Right ventricle myocardium inferior (tissue), 1 donor: ENCODE measurements at regions of chr1 and their contacts with region 1.

Region 1: DNA sequence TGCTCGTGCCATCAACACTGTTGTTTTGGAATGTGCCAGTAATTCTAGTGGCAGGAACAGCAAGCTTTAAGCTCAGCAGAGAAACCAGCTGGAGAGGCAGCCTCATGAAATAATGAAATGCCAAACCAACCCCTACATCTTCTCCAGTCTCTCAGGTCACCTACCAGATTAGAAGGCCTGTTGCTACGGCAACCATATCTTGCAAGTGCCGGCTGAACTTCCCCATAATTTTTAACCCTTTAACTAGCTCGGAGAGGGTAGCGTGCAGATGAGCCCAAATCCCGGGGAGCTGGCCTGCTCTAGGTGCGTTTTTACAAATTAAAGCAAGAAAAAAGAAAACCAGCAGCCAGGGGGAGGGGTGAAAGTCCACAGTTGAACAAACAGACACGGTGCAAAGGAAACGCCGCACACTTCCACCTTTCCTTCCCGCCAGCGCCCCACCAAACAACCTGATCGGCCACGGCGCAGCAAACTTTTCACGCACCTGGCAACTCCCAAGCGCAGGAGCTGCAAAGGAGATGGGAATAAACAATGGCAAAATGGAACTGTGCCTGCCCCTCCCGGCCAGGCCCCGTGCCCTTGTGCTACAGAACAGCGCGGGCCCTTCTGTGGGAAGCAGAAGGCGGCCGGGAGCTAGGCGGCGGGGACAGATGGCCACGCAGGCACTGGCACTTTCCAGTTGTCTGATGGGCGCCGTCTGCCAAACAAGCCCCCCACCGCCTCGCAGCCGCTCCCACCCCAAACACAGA is 50.1 kb downstream of the SSBP3 start:
- DNase-seq: no peak
- ATAC-seq: no peak

Region 2: GRCh38 chr1:54310439-54311328 is 45.4 kb before region 1 on chr1:
- intact Hi-C with region 1: loop called (anchors 2 kb)
- DNase-seq: no peak
- ATAC-seq: no peak

Region 3: GRCh38 chr1:54375712-54376429 is 19.8 kb after region 1 on chr1:
- intact Hi-C with region 1: loop called (anchors 2 kb)
- DNase-seq: no peak
- ATAC-seq: peak; percentile 38

Region 4: DNA sequence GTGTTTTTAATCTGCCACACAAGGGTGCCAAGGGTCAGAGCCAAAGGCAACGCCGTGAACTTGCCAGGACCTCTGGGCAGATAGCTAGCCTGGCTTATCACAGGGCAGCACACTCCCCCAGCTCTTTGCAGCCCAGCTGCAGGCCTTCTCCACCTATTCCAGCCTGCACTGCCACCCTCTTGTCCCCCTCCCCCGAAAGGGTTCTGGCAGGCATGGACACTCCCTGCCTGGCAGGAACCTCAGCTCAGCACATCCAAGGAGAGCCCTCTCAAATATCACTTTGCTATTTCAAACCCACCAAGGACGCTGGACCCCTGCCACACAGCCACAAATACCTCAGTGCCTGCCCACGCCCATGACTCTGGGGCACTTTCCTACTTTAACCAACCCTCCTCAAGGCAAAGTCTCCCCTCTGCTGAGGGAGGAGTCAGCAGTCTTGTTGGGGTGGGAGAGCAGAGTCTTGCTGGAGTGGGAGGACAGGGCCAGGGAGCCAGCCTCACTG is 41.0 kb after region 1 on chr1:
- intact Hi-C with region 1: loop called (anchors 2 kb)
- DNase-seq: peak; percentile 81
- ATAC-seq: peak; percentile 96